HepG2 (cell line): ENCODE measurements at regions of chr11 and their contacts with region 1.

Region 1: DNA sequence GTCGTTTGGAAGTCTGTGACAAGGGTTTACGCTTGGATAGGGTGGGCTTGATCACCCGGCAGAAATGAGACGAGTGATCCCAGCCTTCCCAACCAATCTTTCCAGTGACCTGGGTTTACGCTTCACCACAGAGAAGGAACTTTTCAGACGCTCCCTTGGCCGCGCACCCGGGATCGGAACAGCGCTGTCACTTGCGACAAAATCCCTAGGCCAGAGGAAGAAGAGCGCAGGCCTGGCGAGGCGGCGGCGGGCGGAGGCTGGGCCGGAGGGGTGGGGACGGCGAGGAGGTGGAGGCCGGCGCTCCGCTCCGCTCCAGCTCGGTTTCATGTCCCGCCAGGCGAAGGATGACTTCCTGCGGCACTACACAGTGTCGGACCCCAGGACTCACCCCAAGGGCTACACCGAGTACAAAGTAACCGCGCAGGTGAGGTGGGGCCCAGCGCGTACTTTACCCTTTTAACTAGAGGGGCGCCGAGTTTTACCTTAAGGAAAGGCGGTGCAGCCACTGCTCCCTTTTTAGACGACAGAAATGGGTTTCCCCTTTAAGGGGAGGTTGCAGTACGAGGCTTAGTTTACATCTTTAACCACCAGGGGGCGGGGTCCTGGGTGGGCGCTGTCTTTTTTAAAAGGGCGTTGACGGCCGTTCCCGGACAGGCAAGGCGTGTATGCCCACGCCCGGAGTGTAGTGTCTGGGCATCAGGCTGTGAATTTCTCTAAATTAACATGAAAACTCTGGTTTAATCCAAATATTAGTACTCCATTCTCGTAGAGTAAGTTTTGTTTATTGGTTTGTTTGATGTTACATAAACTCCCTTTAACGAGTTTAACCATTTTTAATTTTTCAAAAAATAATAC is at the start of gene SNX15:
- DNase-seq: peak; percentile 94
- ATAC-seq: peak; percentile 89
- H3K4me3 ChIP-seq: peak within 1 kb of the TSS; percentile 68 to 78 (median 75)
- H3K27ac ChIP-seq: peak within 1 kb of the TSS; percentile 85
- H3K4me1 ChIP-seq: peaks cover 48% of the 10 kb centered on the region
- H3K27me3 ChIP-seq: no peaks in the 10 kb centered on the region; a peak in 1 of 5 replicates
- CTCF ChIP-seq: peak; percentile 74
- EP300 ChIP-seq: no peak
- POLR2A ChIP-seq: peak; percentile 62 to 75
- RAD21 ChIP-seq: peak; percentile 49; the same call in 1 of the 2 replicates
- total RNA-seq, gene SNX15: 20.7 and 22.6 TPM in 2 replicates

Region 2: DNA sequence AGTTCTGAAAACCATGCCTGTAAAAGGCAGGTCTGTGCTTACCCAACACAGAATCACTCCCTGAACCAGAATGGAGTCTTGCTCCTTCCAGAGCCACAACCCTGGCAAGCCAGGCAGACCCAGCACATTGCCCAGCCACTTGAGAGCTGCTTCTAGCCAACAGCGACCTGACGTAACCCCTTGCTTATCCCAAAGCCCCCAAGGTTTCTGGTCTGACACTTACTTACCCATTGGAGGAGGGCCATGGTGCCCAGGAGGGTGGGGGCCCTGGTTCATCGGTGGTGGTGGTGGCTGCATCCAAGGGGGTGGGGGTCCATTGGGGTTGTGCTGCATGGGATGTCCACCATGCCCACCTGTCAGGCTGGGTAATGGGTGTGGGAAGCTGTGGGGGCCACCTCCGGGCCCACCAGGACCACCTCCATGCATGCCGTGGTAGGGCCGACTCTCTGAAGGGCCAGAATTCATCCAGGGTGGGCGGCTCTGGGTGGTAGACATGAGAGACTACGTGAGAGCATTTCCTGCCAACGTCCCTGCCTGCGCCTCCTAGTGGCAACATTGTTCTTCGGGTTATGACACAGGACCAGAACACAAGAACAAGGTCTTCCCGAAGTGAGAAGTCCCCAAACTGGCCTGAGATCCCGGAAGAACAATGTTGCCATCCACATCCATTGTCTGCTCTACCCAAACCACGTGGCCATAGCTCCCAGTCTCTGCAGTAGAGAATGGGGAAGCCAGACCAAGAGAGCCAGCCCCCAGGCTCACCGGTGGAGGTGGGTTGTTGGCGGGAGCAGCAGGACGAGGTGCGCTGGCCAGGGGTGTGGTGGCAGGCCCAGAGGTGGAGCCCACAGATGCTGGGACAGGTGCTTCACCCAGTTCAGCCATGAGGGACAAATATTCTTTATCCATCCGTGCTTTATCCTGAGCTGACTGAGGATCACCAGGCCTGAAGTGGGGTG is 259.8 kb before region 1 on chr11:
- CTCF ChIA-PET with region 1: no interaction called
- POLR2A ChIA-PET with region 1: no interaction called
- in situ Hi-C with region 1: no loop called
- intact Hi-C with region 1: no loop called
- DNase-seq: peak; percentile 67
- ATAC-seq: peak; percentile 57
- H3K4me3 ChIP-seq: no peak overlapping the region
- H3K27ac ChIP-seq: no peak overlapping the region
- H3K4me1 ChIP-seq: peaks cover 3% of the 10 kb centered on the region; the same call in 1 of the 2 replicates
- H3K27me3 ChIP-seq: no peaks in the 10 kb centered on the region
- CTCF ChIP-seq: peak; percentile 77
- EP300 ChIP-seq: no peak
- POLR2A ChIP-seq: peak in 1 of 2 experiments; percentile 26; a peak in 2 of 4 replicates
- RAD21 ChIP-seq: no peak

Region 3: DNA sequence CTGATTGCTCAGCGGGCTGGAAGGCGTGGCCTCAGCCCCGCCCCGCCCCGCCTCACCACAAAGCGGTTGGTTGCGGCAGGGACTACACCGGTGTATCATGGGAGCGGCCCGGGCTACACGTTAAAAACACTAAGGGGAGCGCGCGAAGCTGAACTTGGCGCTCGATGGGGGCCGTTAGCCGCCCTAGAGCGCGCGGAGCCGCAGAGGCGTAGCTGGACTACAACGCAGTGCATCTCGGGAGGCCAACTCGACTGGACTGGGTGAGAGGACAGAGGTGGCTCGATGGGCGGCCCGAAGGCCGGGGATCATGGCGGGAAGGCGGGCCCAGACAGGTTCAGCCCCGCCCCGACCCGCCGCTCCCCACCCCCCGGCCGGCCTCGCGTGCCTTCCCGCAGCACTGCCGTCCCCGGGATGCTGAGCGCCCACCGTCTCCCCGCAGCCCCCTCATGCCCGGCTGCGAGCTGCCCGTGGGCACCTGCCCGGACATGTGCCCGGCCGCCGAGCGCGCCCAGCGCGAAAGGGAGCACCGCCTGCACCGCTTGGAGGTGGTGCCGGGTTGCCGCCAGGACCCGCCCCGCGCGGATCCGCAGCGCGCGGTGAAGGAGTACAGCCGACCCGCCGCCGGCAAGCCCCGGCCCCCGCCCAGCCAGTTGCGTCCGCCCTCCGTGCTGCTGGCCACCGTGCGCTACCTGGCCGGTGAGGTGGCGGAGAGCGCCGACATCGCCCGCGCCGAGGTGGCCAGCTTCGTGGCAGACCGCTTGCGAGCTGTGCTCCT is 13.6 kb after region 1 on chr11 and contains the start of gene SAC3D1:
- CTCF ChIA-PET with region 1: no interaction called
- POLR2A ChIA-PET with region 1: interaction called, 10 read pairs
- in situ Hi-C with region 1: no loop called
- intact Hi-C with region 1: loop called (anchors 1 kb)
- DNase-seq: peak; percentile 95
- ATAC-seq: peak; percentile 94
- H3K4me3 ChIP-seq: peak within 1 kb of the TSS; percentile 76 to 89 (median 81)
- H3K27ac ChIP-seq: peak within 1 kb of the TSS; percentile 87
- H3K4me1 ChIP-seq: peaks cover 24% of the 10 kb centered on the region
- H3K27me3 ChIP-seq: no peaks in the 10 kb centered on the region
- CTCF ChIP-seq: peak; percentile 10; the same call in 1 of the 2 replicates
- EP300 ChIP-seq: no peak
- POLR2A ChIP-seq: peak; percentile 13 to 66; a peak in 3 of 4 replicates
- RAD21 ChIP-seq: peak; percentile 44
- total RNA-seq, gene SAC3D1: 33.2 and 36.3 TPM in 2 replicates

Region 4: DNA sequence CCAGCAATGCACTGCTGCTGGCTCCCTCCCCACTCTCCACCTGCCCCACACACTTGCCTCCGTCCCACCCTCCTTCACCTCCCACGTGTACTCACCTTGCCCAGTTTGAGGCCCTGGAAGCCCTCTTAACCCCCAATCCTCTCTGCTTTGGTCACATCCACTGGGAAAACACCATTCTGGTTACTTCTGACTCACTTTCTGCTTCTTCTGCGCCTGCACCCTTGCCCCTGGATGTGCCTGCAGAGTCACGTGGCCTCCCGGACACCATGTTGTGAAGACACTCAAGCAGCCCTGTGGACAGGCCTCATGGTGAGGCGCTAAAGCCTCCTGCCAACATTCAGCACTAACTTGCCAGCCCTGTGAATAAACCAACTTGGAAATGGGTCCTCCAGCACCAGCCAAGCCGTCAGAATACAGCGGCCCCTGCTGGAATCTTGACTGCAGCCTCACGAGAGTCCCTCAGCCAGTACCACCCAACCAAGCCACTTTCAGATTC is 33.5 kb after region 1 on chr11:
- CTCF ChIA-PET with region 1: interaction called, 6 read pairs
- POLR2A ChIA-PET with region 1: interaction called, 5 read pairs
- in situ Hi-C with region 1: loop called (anchors 5 kb)
- intact Hi-C with region 1: loop called (anchors 1 kb)
- DNase-seq: peak; percentile 42
- ATAC-seq: peak; percentile 56
- H3K4me3 ChIP-seq: no peak overlapping the region
- H3K27ac ChIP-seq: no peak overlapping the region
- H3K4me1 ChIP-seq: peaks cover 82% of the 10 kb centered on the region
- H3K27me3 ChIP-seq: no peaks in the 10 kb centered on the region
- CTCF ChIP-seq: peak; percentile 71
- EP300 ChIP-seq: no peak
- POLR2A ChIP-seq: no peak
- RAD21 ChIP-seq: peak; percentile 65

Region 5: DNA sequence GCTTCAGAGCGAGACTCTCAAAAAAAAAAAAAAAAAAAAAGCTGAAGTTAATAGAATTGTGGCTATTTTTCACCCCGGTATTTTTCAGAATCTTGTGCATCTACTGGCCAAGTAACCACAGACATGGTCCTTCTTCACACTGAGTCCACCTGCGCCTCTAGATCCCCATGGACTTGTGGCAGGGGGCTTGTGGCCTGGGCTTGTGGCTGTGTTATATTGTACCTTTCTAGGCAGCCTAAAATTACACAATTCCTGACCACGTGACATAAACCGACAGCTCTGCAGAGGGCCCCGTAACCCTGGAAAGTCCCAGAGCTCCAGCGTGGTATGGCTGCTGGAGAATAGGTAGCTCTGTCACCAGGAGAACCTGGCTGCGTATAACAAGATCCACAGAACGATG is 41.8 kb after region 1 on chr11:
- CTCF ChIA-PET with region 1: no interaction called
- POLR2A ChIA-PET with region 1: interaction called, 5 read pairs
- in situ Hi-C with region 1: loop called (anchors 5 kb)
- intact Hi-C with region 1: no loop called
- DNase-seq: peak; percentile 63
- ATAC-seq: no peak
- H3K4me3 ChIP-seq: no peak overlapping the region
- H3K27ac ChIP-seq: peak overlapping the region; percentile 29
- H3K4me1 ChIP-seq: peaks cover 36% of the 10 kb centered on the region
- H3K27me3 ChIP-seq: no peaks in the 10 kb centered on the region
- CTCF ChIP-seq: no peak
- EP300 ChIP-seq: no peak
- POLR2A ChIP-seq: no peak
- RAD21 ChIP-seq: no peak

Region 6: DNA sequence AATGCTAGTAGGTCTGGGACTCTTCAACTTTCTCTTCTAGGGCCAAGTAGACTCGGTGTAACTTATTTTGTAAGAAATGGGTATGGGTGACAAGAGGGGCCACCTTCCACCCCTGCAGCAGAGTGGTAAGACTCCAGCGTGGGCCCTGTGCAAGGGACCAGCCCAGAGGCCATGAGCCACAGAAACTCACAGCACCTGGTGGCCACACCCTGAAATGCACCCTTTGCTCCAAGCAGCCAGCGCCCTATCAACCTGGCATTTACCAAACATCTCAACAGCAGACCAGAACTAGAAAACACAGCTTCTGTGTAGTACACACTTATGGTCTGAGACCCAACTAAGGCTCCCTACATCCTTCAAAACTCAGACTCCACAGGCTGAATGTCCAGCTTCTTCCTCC is 50.7 kb after region 1 on chr11:
- CTCF ChIA-PET with region 1: interaction called, 17 read pairs
- POLR2A ChIA-PET with region 1: no interaction called
- in situ Hi-C with region 1: no loop called
- intact Hi-C with region 1: loop called (anchors 5 kb)
- DNase-seq: peak; percentile 49
- ATAC-seq: peak; percentile 94
- H3K4me3 ChIP-seq: no peak overlapping the region
- H3K27ac ChIP-seq: peak overlapping the region; percentile 27
- H3K4me1 ChIP-seq: peaks cover 33% of the 10 kb centered on the region
- H3K27me3 ChIP-seq: no peaks in the 10 kb centered on the region
- CTCF ChIP-seq: peak; percentile 86
- EP300 ChIP-seq: no peak
- POLR2A ChIP-seq: no peak
- RAD21 ChIP-seq: peak; percentile 78